Activated CD4-positive, alpha-beta T cell treated with anti-CD3 and anti-CD28 coated beads for 36 hours (primary cell): ENCODE measurements at regions of chr18 and their contacts with region 1.

Region 1: GRCh38 chr18:5546660-5547059 is 2.9 kb upstream of the EPB41L3 start:
- DNase-seq: peak; percentile 20
- ATAC-seq: peak; percentile 50
- H3K4me3 Mint-ChIP-seq: no peak overlapping the region
- H3K27ac Mint-ChIP-seq: no peak overlapping the region
- H3K4me1 Mint-ChIP-seq: peaks cover 3% of the 10 kb centered on the region
- H3K27me3 Mint-ChIP-seq: peaks cover 27% of the 10 kb centered on the region

Region 2: DNA sequence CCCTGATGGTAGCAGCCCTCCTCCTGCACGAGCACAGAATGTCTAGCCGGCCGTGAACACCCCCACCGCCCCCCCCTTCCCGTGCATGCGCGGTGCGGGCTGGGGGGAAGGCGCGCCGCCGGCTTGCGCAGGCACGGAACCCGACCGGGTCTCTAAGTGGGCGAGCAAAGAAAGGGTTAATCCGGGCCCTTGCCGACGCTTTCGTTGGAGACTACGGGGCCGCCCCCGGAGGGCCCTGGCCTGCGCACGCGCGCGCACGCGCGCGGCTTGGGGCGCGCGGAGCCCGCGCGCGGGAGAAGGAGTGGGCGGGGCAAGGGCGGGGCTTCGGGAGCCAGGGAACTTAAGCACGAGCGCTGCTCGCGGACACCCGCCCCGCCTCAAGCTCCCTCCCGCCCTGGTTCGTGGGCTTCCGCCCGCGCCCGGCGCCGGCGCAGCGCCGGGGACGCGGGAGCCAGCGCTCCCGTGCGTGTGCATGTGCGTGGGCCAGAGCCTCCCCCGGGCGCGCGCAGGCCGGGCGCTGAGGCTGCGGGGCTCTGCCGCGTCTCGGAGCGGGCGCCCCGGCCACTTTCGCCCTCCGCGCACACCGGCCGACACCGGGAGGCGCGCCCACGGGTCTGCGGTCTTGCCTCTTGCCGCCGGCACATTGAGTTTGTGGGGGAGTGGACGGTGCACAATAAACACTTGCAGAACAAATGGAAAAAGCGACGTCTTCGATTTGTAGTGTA is 250.5 kb before region 1 on chr18:
- CTCF ChIA-PET with region 1: no interaction called
- POLR2A ChIA-PET with region 1: no interaction called
- intact Hi-C with region 1: loop called in 1 of 2 experiments (anchors 5 kb)
- DNase-seq: peak; percentile 96
- ATAC-seq: peak; percentile 64
- H3K4me3 Mint-ChIP-seq: peak overlapping the region; percentile 89
- H3K27ac Mint-ChIP-seq: peak overlapping the region; percentile 98
- H3K4me1 Mint-ChIP-seq: peaks cover 34% of the 10 kb centered on the region
- H3K27me3 Mint-ChIP-seq: peaks cover under 1% of the 10 kb centered on the region

Region 3: GRCh38 chr18:5424903-5425664 is 121.6 kb before region 1 on chr18:
- CTCF ChIA-PET with region 1: no interaction called
- POLR2A ChIA-PET with region 1: no interaction called
- intact Hi-C with region 1: loop called in 1 of 2 experiments (anchors 10 kb)
- DNase-seq: no peak
- ATAC-seq: peak; percentile 49
- H3K4me3 Mint-ChIP-seq: no peak overlapping the region
- H3K27ac Mint-ChIP-seq: no peak overlapping the region
- H3K4me1 Mint-ChIP-seq: peaks cover 4% of the 10 kb centered on the region
- H3K27me3 Mint-ChIP-seq: peaks cover 2% of the 10 kb centered on the region

Region 4: GRCh38 chr18:5456577-5457463 is 89.8 kb before region 1 on chr18:
- CTCF ChIA-PET with region 1: no interaction called
- POLR2A ChIA-PET with region 1: no interaction called
- intact Hi-C with region 1: loop called (anchors 1 to 5 kb)
- DNase-seq: peak; percentile 41
- ATAC-seq: peak; percentile 73
- H3K4me3 Mint-ChIP-seq: peak overlapping the region; percentile 62
- H3K27ac Mint-ChIP-seq: peak overlapping the region; percentile 84
- H3K4me1 Mint-ChIP-seq: peaks cover 22% of the 10 kb centered on the region
- H3K27me3 Mint-ChIP-seq: no peaks in the 10 kb centered on the region